ENCODE measurements at regions of chr19 and their contacts with region 1.

Region 1: GRCh38 chr19:47209319-47210179 is 21.4 kb downstream of the BBC3 start:
- DNase-seq: no peak
- H3K4me3 ChIP-seq: no peak overlapping the region
- H3K27ac ChIP-seq: no peak overlapping the region
- H3K4me1 ChIP-seq: peaks cover 0 to 10% (median 5%) of the 10 kb centered on the region in 3 donors
- H3K27me3 ChIP-seq: no peaks in the 10 kb centered on the region
- CTCF ChIP-seq: no peak
- POLR2A ChIP-seq: no peak

Region 2: DNA sequence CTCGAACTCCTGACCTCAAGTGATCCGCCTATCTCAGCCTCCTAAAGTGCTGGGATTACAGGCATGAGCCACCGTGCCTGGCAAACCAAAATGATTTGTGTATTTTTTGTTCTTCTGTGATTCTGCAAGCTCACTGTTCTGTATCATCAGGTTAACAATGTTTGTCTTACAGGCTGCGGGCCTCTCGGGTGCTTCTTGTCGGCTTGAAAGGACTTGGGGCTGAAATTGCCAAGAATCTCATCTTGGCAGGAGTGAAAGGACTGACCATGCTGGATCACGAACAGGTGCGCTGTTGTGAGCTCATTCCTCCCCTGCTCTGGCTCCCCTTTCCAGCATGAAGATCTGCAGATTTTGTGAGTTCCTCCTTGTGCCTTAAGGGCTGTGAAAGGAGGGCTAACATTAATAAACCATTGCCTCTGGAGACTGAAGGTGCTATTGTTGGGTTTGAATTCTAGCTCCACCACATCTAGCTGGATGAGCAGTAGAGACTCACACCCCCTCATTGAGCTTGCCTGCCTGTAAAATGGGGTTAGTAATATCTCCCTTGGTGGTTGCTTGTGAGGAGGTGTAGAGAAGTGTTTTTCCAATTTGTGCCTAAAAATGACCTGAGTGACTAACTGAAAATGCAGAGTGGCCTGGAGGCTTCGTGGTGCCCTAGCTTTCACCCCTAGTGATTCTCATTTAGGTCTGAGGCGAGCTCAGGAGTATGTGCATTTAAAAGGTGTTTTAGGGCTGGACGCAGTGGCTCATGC is 66.1 kb before region 1 on chr19:
- intact Hi-C with region 1: loop called (anchors 10 kb)
- DNase-seq: no peak
- H3K4me3 ChIP-seq: no peak overlapping the region
- H3K27ac ChIP-seq: peak overlapping the region in 2 of 4 donors; percentile 5 to 18
- H3K4me1 ChIP-seq: peaks cover 0 to 20% (median 4%) of the 10 kb centered on the region in 3 donors
- H3K27me3 ChIP-seq: no peaks in the 10 kb centered on the region
- CTCF ChIP-seq: no peak
- POLR2A ChIP-seq: no peak

Region 3: DNA sequence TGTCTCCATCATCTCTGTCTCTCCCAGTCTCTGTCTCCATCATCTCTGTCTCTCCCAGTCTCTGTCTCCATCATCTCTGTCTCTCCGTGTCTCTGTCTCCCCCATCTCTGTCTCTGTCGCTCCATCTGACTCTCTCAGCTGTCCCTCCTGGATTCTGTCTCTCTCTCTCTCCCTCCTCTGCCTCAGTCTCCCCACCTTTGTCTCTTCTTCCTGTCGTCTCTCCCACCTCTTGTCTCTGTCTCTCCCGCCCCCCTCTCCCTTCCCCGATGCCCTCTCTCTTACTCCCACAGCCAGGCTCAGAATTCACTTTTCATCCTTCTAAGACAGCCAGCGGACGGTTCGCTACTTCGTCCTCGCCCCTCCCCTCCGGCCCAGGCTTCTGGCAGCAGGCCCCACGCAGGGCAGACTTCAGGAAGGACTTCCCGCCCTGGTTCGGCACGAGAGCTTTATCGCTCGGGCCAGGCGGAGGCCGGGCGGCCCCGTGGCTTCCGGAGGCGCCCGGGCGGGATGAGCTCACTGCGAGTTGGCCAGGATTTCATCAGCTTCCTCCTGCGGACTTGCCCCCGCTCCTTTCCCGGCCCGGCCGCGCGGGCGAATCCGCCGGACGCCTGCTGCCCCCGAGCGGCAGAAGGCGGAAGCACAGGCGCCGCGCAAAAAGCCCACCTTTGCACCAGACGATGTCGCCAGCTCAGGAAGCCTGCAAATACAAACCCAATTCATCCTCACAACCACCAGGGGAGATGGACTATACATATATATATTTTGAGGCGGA is 34.4 kb after region 1 on chr19:
- intact Hi-C with region 1: no loop called
- DNase-seq: no peak
- H3K4me3 ChIP-seq: peak overlapping the region in 3 of 4 donors; percentile 39 to 53 (median 39)
- H3K27ac ChIP-seq: peak overlapping the region; percentile 63 to 77 (median 65)
- H3K4me1 ChIP-seq: peaks cover 33 to 51% (median 35%) of the 10 kb centered on the region in 3 donors
- H3K27me3 ChIP-seq: peaks cover 0 to 45% (median 0%) of the 10 kb centered on the region in 4 donors
- CTCF ChIP-seq: peak; percentile 99 to 100 (median 99)
- POLR2A ChIP-seq: peak in 1 of 4 donors; percentile 37